ENCODE measurements at regions of chr11 and their contacts with region 1.

Region 1: GRCh38 chr11:57456960-57457642 is 3.2 kb upstream of the RTN4RL2 start:
- DNase-seq: peak; percentile 94
- ATAC-seq: peak; percentile 38
- H3K4me3 Mint-ChIP-seq: peak overlapping the region; percentile 80
- H3K27ac Mint-ChIP-seq: no peak overlapping the region
- H3K4me1 Mint-ChIP-seq: peaks cover 26% of the 10 kb centered on the region
- H3K27me3 Mint-ChIP-seq: peaks cover 62% of the 10 kb centered on the region
- CTCF ChIP-seq: peak; percentile 100

Region 2: GRCh38 chr11:57224537-57224936 is 232.6 kb before region 1 on chr11:
- CTCF ChIA-PET with region 1: no interaction called
- POLR2A ChIA-PET with region 1: no interaction called
- DNase-seq: no peak
- ATAC-seq: no peak
- H3K4me3 Mint-ChIP-seq: no peak overlapping the region
- H3K27ac Mint-ChIP-seq: no peak overlapping the region
- H3K4me1 Mint-ChIP-seq: peaks cover 4% of the 10 kb centered on the region
- H3K27me3 Mint-ChIP-seq: no peaks in the 10 kb centered on the region; the same call in 1 of the 2 replicates
- CTCF ChIP-seq: no peak

Region 3: GRCh38 chr11:57335343-57336110 is 121.6 kb before region 1 on chr11 and contains the start of gene SSRP1:
- CTCF ChIA-PET with region 1: interaction called, 22 read pairs
- POLR2A ChIA-PET with region 1: no interaction called
- DNase-seq: peak; percentile 79
- ATAC-seq: peak; percentile 94
- H3K4me3 Mint-ChIP-seq: peak within 1 kb of the TSS; percentile 94
- H3K27ac Mint-ChIP-seq: peak within 1 kb of the TSS; percentile 96
- H3K4me1 Mint-ChIP-seq: peaks cover 47% of the 10 kb centered on the region
- H3K27me3 Mint-ChIP-seq: peaks cover 11% of the 10 kb centered on the region
- CTCF ChIP-seq: no peak
- total RNA-seq, gene SSRP1: 218 to 228 TPM (median 223 TPM) in 3 replicates

Region 4: GRCh38 chr11:57364851-57365660 is 92.0 kb before region 1 on chr11:
- CTCF ChIA-PET with region 1: interaction called, 15 read pairs
- POLR2A ChIA-PET with region 1: interaction called, 4 read pairs
- DNase-seq: peak; percentile 48
- ATAC-seq: peak; percentile 94
- H3K4me3 Mint-ChIP-seq: no peak overlapping the region; the same call in 1 of the 2 replicates
- H3K27ac Mint-ChIP-seq: no peak overlapping the region
- H3K4me1 Mint-ChIP-seq: peaks cover 24% of the 10 kb centered on the region
- H3K27me3 Mint-ChIP-seq: peaks cover 9% of the 10 kb centered on the region; the same call in 1 of the 2 replicates
- CTCF ChIP-seq: no peak

Region 5: GRCh38 chr11:57444362-57445121 is 12.6 kb before region 1 on chr11:
- CTCF ChIA-PET with region 1: interaction called, 36 read pairs
- POLR2A ChIA-PET with region 1: no interaction called
- DNase-seq: no peak
- ATAC-seq: no peak
- H3K4me3 Mint-ChIP-seq: no peak overlapping the region
- H3K27ac Mint-ChIP-seq: no peak overlapping the region
- H3K4me1 Mint-ChIP-seq: no peaks in the 10 kb centered on the region
- H3K27me3 Mint-ChIP-seq: peaks cover 11% of the 10 kb centered on the region
- CTCF ChIP-seq: no peak

Region 6: DNA sequence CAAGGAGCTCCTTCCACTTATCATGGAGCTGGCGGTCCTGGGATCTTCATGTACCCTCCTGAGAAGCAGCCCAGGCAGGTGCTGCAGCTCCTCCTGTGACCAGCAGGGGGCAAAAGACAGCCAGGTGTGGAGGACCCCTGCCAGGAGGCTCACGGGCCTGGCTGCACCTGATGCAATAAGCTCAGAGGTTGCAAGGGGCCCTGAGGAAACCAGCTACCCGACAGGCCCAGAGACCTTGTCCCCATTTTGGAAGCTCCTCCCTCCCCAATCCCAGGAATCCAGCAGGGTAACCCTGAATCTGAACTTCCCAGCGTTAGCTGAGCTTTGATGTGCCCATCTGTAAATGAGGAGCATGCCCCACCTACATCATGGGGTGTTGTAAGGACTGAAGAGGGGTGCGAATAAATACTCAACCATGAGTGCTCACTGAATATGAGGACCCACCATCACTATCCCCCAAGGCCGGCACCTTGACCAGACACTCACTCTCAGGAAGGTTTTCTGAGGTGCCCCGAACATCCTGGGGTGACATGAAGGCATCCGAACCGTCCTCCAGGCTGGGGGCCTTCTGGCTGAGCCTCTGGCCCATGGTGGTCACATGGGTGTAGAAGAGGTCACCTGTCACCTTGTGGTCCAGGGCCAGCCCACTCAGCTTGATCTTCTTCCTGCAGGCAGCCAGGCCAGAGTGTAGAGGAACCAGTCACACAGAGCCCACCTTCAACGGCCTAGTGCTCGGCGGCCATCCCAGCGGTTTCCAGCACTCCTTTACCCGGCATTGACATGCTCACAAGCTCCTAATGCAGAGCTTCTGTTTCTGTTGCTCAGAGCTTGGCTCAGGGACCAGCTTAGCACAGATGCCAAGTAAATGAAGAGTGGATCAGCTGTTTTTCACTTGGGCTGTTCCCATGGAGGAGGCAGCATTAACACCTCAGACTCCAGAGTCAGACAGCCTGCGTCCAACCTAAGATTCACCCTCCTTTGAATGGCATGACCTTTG is 36.7 kb after region 1 on chr11:
- CTCF ChIA-PET with region 1: interaction called, 53 read pairs
- POLR2A ChIA-PET with region 1: interaction called, 15 read pairs
- DNase-seq: peak; percentile 95
- ATAC-seq: peak; percentile 83
- H3K4me3 Mint-ChIP-seq: no peak overlapping the region
- H3K27ac Mint-ChIP-seq: peak overlapping the region; percentile 96
- H3K4me1 Mint-ChIP-seq: peaks cover 15% of the 10 kb centered on the region
- H3K27me3 Mint-ChIP-seq: no peaks in the 10 kb centered on the region; the same call in 1 of the 2 replicates
- CTCF ChIP-seq: peak; percentile 93

Region 7: DNA sequence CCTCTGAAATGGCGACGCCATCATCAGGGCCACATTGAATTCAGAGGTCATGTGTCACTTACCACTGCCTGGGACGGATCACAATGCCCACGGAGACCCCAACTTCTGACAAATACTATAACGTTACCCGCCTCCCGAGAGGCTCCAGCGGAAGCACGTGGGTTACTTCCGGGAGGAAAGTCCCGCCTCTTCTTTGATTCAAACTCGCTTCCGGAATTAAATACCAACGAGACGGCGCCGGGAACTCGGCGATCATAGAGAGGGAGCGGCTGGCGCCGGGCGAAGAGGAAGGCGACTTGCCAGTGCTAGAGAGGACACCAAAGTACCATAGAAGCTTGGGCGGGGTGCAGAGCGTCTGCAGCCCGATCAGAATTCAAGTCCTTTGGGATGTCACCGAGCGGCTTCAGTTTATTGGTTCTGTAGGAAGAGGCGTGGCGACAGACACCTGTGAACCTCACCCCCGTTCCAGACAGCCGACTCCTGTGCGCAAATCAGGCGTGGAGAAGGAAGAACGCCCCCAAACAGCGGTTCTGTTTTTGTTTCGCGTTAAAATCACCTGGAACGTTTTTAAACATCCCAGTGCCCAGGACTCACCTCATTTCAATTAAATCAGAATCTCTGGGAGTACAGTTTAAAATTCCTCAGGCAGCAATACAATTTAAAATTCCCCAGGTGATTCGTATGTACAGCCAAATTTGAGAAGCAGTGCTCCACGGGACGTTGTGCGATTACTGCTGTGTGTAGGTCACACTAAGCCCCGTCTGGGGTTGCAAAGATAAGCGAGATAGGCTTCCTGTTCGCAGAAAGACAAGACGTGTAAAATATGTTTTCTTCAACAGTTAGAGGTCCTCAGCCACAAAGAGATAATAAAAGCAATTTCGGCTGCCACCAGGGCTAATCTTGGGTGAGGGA is 73.8 kb after region 1 on chr11 and contains the start of gene TIMM10:
- CTCF ChIA-PET with region 1: interaction called, 59 read pairs
- POLR2A ChIA-PET with region 1: no interaction called
- DNase-seq: peak; percentile 94
- ATAC-seq: peak; percentile 98
- H3K4me3 Mint-ChIP-seq: peak within 1 kb of the TSS; percentile 96
- H3K27ac Mint-ChIP-seq: peak within 1 kb of the TSS; percentile 98
- H3K4me1 Mint-ChIP-seq: peaks cover 18% of the 10 kb centered on the region
- H3K27me3 Mint-ChIP-seq: peaks cover 9% of the 10 kb centered on the region
- CTCF ChIP-seq: no peak
- total RNA-seq, gene TIMM10: 63.5 to 92.8 TPM (median 68.4 TPM) in 3 replicates

Region 8: DNA sequence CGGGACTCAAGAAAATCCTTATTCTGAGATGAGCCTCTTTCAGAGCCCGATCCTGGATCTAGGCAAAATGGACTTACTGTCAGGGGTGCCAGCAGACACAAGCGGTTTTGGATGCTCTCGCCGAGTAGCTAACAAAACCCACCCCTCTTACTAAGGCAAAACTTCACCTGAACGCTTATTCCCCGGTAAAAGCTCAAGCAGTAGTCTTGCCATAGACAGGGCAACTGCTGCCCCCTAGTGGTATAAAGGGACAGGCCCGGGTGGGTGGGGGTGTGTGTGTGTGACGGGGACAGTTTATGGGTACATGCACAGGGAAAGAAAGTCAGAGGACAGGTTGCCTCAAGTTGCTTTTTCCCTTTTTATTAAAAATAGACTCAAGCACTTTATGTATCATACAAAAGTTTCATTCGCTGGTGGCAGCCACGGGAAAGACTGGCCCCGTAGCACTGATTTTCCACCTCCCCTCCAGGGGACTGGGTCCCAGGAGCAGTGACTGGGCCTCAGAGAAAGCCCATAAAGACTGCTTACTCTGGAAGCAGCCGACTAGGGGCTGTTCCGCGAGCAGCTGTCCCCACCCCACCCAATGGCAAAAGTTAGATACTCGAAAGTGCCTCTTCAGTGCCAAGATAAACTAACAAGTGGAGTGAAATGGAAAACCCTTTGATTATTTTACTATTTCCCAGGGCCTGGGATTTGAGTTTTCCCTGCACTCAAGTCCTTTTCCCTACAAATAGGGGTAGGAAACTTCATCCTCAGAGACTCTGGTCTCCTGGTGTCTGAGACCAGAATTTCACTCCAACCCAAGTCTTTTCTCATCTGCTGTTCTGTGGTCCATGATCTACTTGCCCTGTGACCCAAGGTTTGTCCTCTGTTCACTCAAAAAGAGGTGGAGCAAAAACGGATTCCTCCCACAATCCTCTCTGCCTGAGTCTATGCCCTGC is 187.9 kb after region 1 on chr11:
- CTCF ChIA-PET with region 1: interaction called, 28 read pairs
- POLR2A ChIA-PET with region 1: interaction called, 4 read pairs
- DNase-seq: peak; percentile 96
- ATAC-seq: peak; percentile 32
- H3K4me3 Mint-ChIP-seq: peak overlapping the region; percentile 80
- H3K27ac Mint-ChIP-seq: peak overlapping the region; percentile 92
- H3K4me1 Mint-ChIP-seq: peaks cover 94% of the 10 kb centered on the region
- H3K27me3 Mint-ChIP-seq: peaks cover 14% of the 10 kb centered on the region
- CTCF ChIP-seq: peak; percentile 92

Region 9: DNA sequence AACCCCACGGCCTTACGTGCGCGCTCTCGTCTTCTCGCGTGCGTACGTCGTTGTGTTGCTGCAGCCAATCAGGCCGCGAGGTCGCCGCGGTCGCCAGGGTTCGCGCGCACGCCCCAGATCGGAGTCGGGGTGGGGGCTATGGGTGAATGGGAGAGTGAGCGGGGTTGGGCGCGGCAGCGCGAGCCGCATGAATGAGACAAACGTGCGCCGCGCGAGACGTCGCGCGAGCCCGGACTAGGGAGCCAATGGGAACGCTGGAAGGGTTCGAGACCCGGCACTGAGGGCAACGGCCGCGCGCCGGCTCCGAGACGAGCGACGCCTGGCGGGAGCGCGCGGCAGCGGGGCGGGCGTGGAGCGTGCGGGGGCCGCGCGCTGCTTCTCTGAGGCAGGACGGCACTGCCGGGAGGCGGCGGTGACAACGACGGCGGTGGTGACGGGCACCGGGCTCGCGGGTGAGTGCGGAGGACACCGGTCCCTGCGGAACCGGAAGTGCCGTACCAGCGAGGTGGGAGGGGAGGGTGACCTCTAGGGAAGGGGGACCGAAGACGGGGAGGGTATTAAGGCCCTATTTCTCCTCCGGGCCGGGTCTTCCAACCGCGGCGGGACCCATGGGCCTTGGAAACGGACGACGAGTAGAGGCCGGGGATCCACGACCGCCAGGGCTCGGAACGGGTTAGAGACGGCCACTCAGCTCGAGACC is 210.8 kb after region 1 on chr11 and contains the start of gene ZDHHC5:
- CTCF ChIA-PET with region 1: no interaction called
- POLR2A ChIA-PET with region 1: no interaction called
- DNase-seq: peak; percentile 99
- ATAC-seq: peak; percentile 87
- H3K4me3 Mint-ChIP-seq: peak within 1 kb of the TSS; percentile 99
- H3K27ac Mint-ChIP-seq: peak within 1 kb of the TSS; percentile 100
- H3K4me1 Mint-ChIP-seq: peaks cover 19% of the 10 kb centered on the region
- H3K27me3 Mint-ChIP-seq: no peaks in the 10 kb centered on the region
- CTCF ChIP-seq: peak; percentile 22; the same call in 1 of the 2 replicates
- total RNA-seq, gene ZDHHC5: 49.3 to 51.6 TPM (median 50.5 TPM) in 3 replicates

Region 10: DNA sequence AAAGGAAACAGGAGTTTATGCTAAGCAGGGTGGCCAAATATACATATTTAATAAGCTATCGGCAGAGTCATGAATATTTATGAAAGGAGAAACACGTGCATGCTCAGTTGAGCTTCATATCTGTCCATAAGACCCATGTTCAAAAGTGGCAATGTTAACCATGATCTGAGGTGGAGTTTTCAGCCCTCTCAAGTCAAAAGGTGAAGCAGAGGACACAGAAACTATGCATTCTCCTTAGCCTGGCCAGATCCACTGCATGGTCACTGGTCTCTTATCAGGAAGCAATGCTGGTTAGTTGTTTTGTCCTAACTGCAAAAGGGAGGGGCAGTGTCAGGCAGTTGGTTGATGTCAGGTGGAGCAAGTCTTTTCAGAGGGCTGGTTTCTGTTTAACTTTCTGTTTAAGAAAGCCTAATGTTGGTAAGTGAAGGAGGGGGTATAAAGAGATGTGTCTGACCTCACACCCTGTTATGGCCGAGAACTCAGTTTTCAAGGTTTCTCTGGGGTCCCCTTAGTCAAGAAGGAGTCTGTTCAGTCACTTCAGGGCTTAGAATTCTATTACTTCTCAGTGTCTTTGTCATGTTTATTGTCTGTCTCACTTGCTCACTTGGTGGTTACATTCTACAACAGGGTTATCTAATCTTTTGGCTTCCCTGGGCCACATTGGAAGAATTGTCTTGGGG is 278.7 kb after region 1 on chr11:
- CTCF ChIA-PET with region 1: no interaction called
- POLR2A ChIA-PET with region 1: no interaction called
- DNase-seq: no peak
- ATAC-seq: peak; percentile 62
- H3K4me3 Mint-ChIP-seq: no peak overlapping the region
- H3K27ac Mint-ChIP-seq: peak overlapping the region; percentile 81
- H3K4me1 Mint-ChIP-seq: peaks cover 27% of the 10 kb centered on the region
- H3K27me3 Mint-ChIP-seq: no peaks in the 10 kb centered on the region
- CTCF ChIP-seq: no peak